ENCODE measurements at regions of chr18 and their contacts with region 1.

Region 1: DNA sequence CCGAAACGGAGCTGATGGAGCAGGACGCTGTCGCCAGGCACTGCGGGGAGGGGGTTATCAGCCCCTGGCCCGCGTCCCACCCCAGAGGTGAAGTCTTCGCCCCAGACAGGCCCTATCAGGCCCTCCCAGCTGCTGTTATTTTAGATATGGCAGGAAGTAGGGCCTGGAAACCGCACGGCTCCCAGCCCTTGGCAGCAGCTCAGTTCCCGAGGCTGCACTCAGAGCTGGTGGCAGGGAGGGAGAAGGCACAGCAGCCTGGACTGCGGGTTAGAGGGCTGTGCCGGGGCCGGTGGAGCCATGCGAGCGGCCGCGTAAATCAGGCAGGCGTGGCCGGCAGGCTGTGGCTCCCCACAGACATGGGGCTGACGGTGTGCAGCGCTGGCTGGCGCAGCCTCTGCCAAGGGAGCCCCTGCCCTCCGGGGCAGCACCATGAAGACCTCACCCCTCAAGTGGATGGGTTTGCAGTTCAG is 111.4 kb downstream of the NFATC1 start:
- DNase-seq: peak; percentile 71
- ATAC-seq: peak; percentile 29
- H3K4me3 ChIP-seq: peak overlapping the region in 4 of 5 experiments; percentile 17 to 43 (median 36)
- H3K4me3 Mint-ChIP-seq: peak overlapping the region; percentile 75
- H3K27ac ChIP-seq: peak overlapping the region; percentile 86 to 91
- H3K27ac Mint-ChIP-seq: peak overlapping the region; percentile 93
- H3K4me1 ChIP-seq: peaks cover 48 to 56% of the 10 kb centered on the region in 2 donors
- H3K4me1 Mint-ChIP-seq: peaks cover 60% of the 10 kb centered on the region
- H3K27me3 ChIP-seq: no peaks in the 10 kb centered on the region
- H3K27me3 Mint-ChIP-seq: no peaks in the 10 kb centered on the region
- CTCF ChIP-seq: no peak

Region 2: DNA sequence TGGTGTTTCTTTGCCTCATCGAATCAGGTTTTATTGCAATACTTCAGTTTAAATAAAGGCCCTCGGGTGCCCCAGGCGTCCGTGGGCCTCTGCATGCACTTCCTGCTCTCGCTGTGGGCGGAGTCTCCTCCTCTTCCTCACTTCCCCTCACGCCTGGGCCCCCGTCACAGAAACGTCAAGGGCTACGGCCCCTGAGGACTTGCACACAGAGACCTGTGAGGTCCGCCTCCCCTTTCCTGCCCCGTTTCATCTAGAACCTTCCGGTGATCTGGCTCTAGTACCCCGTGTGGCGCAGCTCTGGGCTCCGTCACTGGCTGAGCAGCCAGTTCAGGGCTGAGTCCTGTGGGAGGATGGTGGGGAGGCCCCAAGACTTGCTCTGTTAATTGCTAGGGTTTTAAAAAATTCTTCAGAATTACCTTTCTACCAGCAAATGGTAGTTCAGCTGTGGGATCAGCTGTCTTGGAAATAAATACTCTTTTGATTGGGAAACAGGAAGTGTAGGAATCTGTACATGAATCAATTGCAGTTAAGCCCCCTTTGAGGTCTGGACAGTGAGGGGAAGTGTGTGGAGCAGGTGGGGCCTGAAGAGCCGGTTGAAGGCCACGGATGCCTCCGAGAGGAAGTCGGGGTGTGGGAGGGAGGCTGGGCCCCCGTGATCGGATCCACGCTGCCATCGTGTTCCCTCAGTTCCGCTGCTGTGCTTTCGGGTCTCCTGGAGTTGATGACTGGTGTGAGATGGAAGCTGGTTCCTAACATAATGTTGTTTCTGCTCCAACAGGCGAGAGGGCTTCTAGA is 101.1 kb before region 1 on chr18:
- CTCF ChIA-PET with region 1: interaction called, 11 read pairs
- POLR2A ChIA-PET with region 1: interaction called, 5 read pairs
- intact Hi-C with region 1: no loop called
- DNase-seq: peak; percentile 96
- ATAC-seq: peak; percentile 89
- H3K4me3 ChIP-seq: peak overlapping the region; percentile 19 to 45 (median 35)
- H3K4me3 Mint-ChIP-seq: peak overlapping the region; percentile 79
- H3K27ac ChIP-seq: peak overlapping the region; percentile 91 to 97
- H3K27ac Mint-ChIP-seq: peak overlapping the region; percentile 92
- H3K4me1 ChIP-seq: peaks cover 60 to 63% of the 10 kb centered on the region in 2 donors
- H3K4me1 Mint-ChIP-seq: peaks cover 71% of the 10 kb centered on the region
- H3K27me3 ChIP-seq: no peaks in the 10 kb centered on the region
- H3K27me3 Mint-ChIP-seq: no peaks in the 10 kb centered on the region
- CTCF ChIP-seq: no peak

Region 3: DNA sequence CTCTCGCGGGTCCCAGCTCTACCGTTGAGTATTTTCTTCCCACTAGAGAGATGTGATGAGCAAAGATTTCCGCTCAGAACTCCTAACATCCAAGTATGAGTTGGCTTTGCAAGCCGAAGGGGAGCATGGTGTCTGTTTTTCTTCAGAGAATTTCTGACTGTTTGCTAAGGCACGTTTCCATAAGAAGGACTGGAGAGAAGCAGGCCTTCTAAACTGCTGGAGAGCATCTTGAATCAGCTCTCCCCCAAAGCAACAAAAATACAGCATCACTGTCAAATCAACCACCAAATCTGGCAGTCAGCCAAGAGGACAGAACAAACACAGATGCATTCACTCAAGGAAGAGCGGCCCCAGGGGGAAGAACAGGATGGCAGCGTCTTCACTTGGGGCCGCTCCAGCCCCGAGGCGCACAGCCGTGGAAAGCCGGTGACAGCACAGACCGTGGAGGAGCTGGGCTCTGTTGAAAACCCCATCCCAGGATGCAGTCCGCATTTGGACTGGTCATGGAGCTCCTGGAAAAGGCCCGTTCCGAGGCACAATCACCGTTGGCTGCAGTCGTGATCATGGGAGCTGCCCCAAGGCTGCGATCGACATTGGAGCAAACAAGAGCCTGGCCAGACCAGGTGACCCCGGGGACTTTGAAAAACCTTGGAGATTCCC is 10.0 kb before region 1 on chr18:
- CTCF ChIA-PET with region 1: interaction called, 5 read pairs
- POLR2A ChIA-PET with region 1: interaction called, 28 read pairs
- intact Hi-C with region 1: loop called (anchors 1 kb)
- DNase-seq: peak; percentile 82
- ATAC-seq: peak; percentile 80
- H3K4me3 ChIP-seq: peak overlapping the region in 1 of 5 experiments; percentile 7
- H3K4me3 Mint-ChIP-seq: peak overlapping the region; percentile 80
- H3K27ac ChIP-seq: peak overlapping the region; percentile 68
- H3K27ac Mint-ChIP-seq: peak overlapping the region; percentile 84
- H3K4me1 ChIP-seq: peaks cover 32% of the 10 kb centered on the region in 2 donors
- H3K4me1 Mint-ChIP-seq: peaks cover 33% of the 10 kb centered on the region
- H3K27me3 ChIP-seq: no peaks in the 10 kb centered on the region
- H3K27me3 Mint-ChIP-seq: no peaks in the 10 kb centered on the region
- CTCF ChIP-seq: no peak